Vagina (tissue), 2 donors: ENCODE measurements at regions of chr1 and their contacts with region 1.

Region 1: DNA sequence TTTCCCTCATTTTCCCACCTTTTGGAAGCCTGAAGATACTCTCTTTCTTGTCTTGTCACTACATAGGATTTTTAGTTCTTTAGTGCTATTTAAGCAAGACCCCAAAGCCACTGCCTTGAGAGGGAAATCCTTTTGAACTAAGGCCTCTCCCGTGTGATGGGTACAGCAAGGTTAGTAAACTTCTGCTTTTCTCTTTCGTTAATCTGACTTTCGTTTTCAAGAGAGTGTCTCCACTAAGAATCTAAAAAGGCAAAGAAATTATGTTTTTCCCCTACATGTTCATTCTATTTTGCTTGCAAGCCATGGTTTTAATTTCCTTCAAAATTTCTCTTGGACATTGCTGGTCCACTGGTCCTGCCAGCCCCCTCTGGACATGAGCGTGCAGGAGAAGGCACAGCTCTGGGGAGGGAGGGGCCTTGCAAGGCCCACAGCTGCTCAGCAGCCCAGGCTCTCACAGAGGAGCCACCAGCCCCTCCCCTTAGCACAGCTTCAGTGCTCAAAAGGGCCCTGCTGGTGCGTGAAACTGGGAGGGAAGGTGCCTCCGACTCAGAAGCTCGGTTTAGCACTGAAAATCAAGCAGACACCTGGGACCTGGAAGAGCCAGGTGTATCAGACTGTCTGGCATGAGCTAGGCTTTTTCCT is 210.9 kb upstream of the GALNT2 start:
- DNase-seq: no peak
- H3K4me3 ChIP-seq: no peak overlapping the region
- H3K27ac ChIP-seq: no peak overlapping the region
- H3K4me1 ChIP-seq: no peaks in the 10 kb centered on the region
- H3K27me3 ChIP-seq: no peaks in the 10 kb centered on the region
- CTCF ChIP-seq: no peak
- POLR2A ChIP-seq: no peak

Region 2: DNA sequence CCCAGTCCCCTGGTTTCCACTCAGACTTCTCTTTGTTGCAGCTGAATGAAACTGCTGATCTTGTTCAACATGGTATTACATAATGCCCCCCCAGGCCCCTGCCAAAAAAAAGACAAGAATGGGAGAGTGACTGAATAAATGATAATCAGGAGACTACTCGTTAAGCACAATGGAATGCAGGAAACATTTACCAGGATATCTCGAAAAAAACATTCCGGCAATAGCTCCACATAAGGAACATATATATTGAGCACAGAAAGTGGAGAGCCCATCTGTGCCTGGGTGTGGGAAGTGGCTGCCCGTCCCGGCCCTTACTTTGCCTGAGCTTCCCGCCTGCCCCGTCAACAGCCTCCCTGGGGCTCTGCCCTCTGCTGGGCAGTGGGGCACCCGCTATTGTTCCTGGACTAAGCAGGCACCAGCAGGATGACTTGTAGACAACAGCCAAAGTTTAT is 1462.9 kb before region 1 on chr1:
- intact Hi-C with region 1: no loop called
- DNase-seq: no peak
- H3K4me3 ChIP-seq: no peak overlapping the region
- H3K27ac ChIP-seq: peak overlapping the region; percentile 73
- H3K4me1 ChIP-seq: peaks cover 17% of the 10 kb centered on the region
- H3K27me3 ChIP-seq: no peaks in the 10 kb centered on the region
- CTCF ChIP-seq: peak in 2 of 3 experiments; percentile 21 to 29
- POLR2A ChIP-seq: no peak

Region 3: GRCh38 chr1:230517786-230518185 is 661.7 kb after region 1 on chr1:
- intact Hi-C with region 1: loop called (anchors 5 kb)
- DNase-seq: no peak
- H3K4me3 ChIP-seq: no peak overlapping the region
- H3K27ac ChIP-seq: no peak overlapping the region
- H3K4me1 ChIP-seq: no peaks in the 10 kb centered on the region
- H3K27me3 ChIP-seq: no peaks in the 10 kb centered on the region
- CTCF ChIP-seq: no peak
- POLR2A ChIP-seq: no peak